ENCODE measurements at regions of chr22 and their contacts with region 1.

Region 1: DNA sequence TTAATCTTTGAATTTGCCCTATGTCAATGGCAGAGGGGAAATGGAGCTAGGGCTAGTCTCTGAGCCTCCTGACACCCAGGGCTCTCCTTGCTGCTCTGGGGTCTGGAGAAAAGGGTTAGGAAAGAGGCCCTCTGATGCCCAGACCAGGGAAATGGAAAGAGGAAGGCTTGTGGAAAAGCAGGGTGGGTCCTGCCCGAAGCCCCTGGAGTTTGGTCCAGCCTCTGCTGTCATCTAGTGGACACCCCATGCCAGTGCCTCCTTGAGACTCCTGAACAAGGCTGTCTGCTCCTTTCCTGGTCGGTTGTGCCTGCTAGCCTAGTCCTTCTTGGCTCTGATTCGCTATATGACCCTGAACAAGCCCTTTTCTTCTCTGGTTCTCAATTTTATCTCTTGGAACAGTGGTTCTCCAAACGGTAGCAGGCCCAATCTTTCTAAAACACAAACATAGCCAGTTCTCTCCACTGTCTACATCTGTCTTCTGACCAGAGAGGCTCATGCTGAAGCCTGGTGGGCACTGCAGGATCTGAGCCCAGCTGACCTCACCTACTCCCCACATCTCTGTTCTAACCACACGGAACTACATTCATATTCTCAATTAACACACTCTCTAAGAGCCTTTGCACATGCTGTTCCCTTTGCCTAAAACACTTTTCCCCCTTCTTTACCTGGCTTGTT is 8.8 kb upstream of the PLA2G3 start:
- DNase-seq: peak; percentile 64
- ATAC-seq: peak; percentile 75
- H3K4me3 Mint-ChIP-seq: no peak overlapping the region
- H3K27ac Mint-ChIP-seq: no peak overlapping the region
- H3K4me1 Mint-ChIP-seq: peaks cover 5% of the 10 kb centered on the region
- H3K27me3 Mint-ChIP-seq: peaks cover 2% of the 10 kb centered on the region

Region 2: DNA sequence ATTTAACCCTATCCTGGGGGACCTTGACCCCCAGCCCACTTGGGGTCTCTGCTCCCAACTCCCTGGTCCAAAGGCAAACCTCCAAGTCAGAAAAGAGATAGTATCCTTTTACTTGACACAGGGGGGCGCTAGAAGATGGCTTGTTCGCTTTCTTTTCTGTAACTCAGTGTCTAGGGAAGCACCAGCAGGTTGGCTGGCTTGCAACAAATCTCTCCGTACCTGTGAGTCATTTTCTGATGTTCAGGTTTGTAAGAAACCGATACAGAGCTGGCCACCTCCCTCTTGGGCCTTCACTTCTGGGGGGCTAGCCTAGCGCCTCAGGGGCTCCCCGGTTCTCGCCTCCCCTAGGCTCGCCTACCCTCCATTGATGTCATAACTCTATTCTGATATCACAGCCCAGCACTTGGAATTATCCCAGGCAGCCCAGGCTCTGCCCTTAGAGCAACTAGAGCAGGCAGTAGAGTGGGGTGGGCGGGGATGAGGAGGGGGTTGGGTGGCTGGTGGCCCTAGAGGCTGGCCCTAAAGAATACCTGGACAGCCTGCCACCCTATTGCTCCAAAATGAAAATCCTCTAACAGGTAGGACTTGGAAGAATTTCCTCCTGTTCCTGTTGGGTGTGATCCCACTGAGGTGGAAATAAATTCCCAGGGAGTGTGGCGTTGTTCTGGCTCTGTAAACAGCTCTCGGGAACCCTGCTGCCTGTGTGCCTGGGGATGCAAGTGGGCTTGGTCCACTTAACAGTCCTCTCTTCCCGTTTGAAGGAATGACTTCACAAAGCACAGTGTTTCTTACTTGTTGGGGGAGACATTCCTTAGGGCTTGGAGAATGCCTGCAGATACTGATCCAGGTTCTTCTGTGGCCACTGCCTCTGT is 385.0 kb before region 1 on chr22:
- CTCF ChIA-PET with region 1: interaction called, 3 read pairs
- POLR2A ChIA-PET with region 1: no interaction called
- intact Hi-C with region 1: loop called in 1 of 2 experiments (anchors 1 kb)
- DNase-seq: peak; percentile 77
- ATAC-seq: peak; percentile 96
- H3K4me3 Mint-ChIP-seq: no peak overlapping the region
- H3K27ac Mint-ChIP-seq: no peak overlapping the region
- H3K4me1 Mint-ChIP-seq: no peaks in the 10 kb centered on the region
- H3K27me3 Mint-ChIP-seq: no peaks in the 10 kb centered on the region

Region 3: GRCh38 chr22:30947816-30948454 is 201.2 kb before region 1 on chr22:
- CTCF ChIA-PET with region 1: no interaction called
- POLR2A ChIA-PET with region 1: no interaction called
- intact Hi-C with region 1: loop called (anchors 2 kb)
- DNase-seq: no peak
- ATAC-seq: peak; percentile 65
- H3K4me3 Mint-ChIP-seq: no peak overlapping the region
- H3K27ac Mint-ChIP-seq: no peak overlapping the region
- H3K4me1 Mint-ChIP-seq: peaks cover 47% of the 10 kb centered on the region
- H3K27me3 Mint-ChIP-seq: no peaks in the 10 kb centered on the region

Region 4: DNA sequence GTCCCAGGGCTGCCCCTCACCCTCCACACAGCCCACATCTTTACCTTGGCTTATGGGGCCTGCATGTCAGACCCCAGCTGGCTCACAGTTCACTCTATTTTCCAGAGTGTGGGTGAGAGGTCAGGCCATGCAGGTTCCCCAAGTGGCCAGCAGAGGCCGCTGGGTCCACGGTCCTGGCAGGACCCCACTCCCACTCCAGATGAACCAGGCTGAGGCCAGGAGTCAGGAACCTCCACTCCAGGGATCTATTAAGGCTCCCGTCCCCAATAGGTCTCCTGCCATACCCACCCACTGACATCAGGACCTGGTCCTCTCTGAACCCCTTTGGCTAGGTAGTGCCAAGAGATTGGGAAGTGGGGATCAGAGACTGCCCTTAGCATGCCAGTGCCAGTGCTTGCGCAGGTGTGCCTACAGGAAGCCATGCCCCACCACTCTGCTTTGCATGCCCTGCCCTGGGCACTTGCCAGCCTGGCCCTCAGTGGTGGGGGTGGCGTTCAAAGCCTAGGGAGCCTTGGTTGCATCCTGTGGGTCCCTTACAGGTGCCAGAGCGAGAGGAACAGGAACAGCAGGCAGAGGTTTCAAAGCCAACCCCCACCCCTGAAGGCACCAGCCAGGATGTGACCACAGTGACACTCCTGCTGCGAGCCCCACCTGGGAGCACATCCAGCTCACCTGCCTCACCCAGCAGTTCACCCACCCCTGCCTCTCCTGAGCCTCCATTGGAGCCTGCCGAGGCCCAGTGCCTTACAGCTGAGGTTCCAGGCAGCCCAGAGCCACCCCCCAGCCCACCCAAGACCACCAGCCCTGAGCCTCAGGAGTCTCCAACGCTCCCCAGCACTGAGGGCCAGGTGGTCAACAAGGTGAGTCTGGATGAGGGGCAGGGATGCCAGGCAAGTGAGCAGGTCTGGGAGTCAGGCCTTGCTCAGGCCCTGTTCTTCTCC is 59.7 kb before region 1 on chr22:
- CTCF ChIA-PET with region 1: interaction called, 3 read pairs
- POLR2A ChIA-PET with region 1: no interaction called
- intact Hi-C with region 1: loop called in 1 of 2 experiments (anchors 1 kb)
- DNase-seq: peak; percentile 60
- ATAC-seq: no peak
- H3K4me3 Mint-ChIP-seq: no peak overlapping the region
- H3K27ac Mint-ChIP-seq: no peak overlapping the region
- H3K4me1 Mint-ChIP-seq: peaks cover 1% of the 10 kb centered on the region
- H3K27me3 Mint-ChIP-seq: no peaks in the 10 kb centered on the region

Region 5: GRCh38 chr22:31133911-31134310 is 15.2 kb before region 1 on chr22:
- CTCF ChIA-PET with region 1: no interaction called
- POLR2A ChIA-PET with region 1: no interaction called
- intact Hi-C with region 1: no loop called
- DNase-seq: no peak
- ATAC-seq: no peak
- H3K4me3 Mint-ChIP-seq: no peak overlapping the region
- H3K27ac Mint-ChIP-seq: no peak overlapping the region
- H3K4me1 Mint-ChIP-seq: no peaks in the 10 kb centered on the region
- H3K27me3 Mint-ChIP-seq: no peaks in the 10 kb centered on the region

Region 6: DNA sequence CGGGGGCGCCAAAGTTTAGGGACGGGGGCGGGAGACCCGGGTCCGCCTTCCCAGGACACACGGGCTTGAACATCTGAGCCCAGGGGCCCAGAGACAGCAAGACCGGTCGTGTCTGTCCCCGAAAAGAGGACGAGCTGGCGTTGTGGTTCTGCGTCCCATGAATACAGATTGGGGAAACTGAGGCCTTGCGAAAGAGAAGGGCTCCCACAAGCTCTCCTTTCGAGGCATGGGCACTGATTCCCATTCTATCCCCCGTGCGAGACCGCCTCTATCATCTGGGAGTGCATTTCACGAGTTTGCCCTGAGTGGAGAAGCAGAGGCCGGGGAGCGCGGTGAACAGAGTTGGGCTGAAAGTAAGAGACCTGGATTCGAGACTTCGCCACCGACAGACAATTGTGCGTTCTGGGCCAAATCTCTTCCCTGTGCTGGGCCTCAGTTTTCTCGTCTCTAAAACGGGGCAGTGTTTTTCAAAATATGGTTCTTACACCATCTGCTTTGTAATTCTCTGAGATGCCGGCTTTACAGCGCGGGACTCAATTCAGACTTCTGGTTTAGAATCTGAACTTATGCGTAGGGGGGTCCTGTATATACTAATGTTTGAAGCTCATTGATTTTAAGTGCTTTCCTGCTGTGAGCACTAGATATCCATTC is 11.4 kb after region 1 on chr22:
- CTCF ChIA-PET with region 1: interaction called, 10 read pairs
- POLR2A ChIA-PET with region 1: no interaction called
- intact Hi-C with region 1: no loop called
- DNase-seq: peak; percentile 47
- ATAC-seq: peak; percentile 45
- H3K4me3 Mint-ChIP-seq: peak overlapping the region; percentile 85
- H3K27ac Mint-ChIP-seq: peak overlapping the region; percentile 95
- H3K4me1 Mint-ChIP-seq: peaks cover 29% of the 10 kb centered on the region
- H3K27me3 Mint-ChIP-seq: no peaks in the 10 kb centered on the region

Measured in activated CD4-positive, alpha-beta T cell treated with anti-CD3 and anti-CD28 coated beads for 36 hours (primary cell).